Common myeloid progenitor, CD34-positive (primary cell): ENCODE measurements at regions of chr17 and their contacts with region 1.

Region 1: GRCh38 chr17:4703330-4703691 is 626 bp downstream of the PELP1 start:
- DNase-seq: no peak
- H3K4me3 ChIP-seq: peak overlapping the region; percentile 78 to 96 (median 84)
- H3K27ac ChIP-seq: peak overlapping the region; percentile 18 to 70
- H3K4me1 ChIP-seq: peaks cover 8 to 21% (median 16%) of the 10 kb centered on the region in 4 experiments
- H3K27me3 ChIP-seq: no peaks in the 10 kb centered on the region

Region 2: GRCh38 chr17:4691686-4692085 is 11.6 kb before region 1 on chr17:
- CTCF ChIA-PET with region 1: interaction called, 10 read pairs
- POLR2A ChIA-PET with region 1: no interaction called
- DNase-seq: no peak
- H3K4me3 ChIP-seq: no peak overlapping the region
- H3K27ac ChIP-seq: no peak overlapping the region
- H3K4me1 ChIP-seq: peaks cover 0 to 6% (median 0%) of the 10 kb centered on the region in 4 experiments
- H3K27me3 ChIP-seq: no peaks in the 10 kb centered on the region